ENCODE measurements at regions of chr22 and their contacts with region 1.

Region 1: DNA sequence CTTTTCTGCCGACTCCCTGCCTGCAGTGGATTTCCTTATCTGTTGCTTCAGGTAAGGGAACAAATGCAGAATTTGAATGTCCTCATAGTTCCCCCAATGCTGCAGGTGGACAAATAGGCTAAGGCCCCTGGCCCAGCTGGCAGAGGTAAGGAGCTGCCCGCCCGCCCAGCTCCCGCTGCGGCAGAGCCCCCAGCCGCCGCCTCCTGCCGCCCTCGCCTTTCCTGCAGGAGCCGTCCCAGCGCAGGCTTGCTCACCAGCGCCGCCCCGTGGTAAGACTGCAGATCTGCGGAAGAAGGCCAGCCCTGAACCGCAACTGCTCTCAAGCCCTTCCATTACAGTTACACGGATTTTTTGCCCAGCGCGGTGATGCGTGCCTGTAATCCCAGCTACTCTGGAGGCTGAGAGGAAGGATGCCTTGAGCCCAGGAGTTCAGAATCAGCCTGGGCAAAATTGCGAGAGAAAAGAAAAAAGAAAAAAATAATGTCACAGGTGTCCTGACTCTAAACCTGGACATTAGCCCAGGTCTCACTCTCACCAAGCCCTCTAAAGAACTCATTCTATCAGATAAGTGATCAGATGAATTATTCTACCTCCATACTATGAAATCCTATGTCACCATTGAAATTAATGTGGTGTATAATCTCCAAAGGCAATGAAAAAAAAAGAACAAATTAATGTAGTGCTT is 51.2 kb upstream of the EMID1 start:
- DNase-seq: peak; percentile 15
- H3K4me3 ChIP-seq: peak overlapping the region; percentile 25; the same call in 1 of the 2 replicates
- H3K27ac ChIP-seq: no peak overlapping the region
- H3K27me3 ChIP-seq: no peaks in the 10 kb centered on the region
- CTCF ChIP-seq: peak; percentile 93

Region 2: GRCh38 chr22:28570691-28571373 is 583.7 kb before region 1 on chr22:
- CTCF ChIA-PET with region 1: no interaction called
- POLR2A ChIA-PET with region 1: no interaction called
- DNase-seq: no peak
- H3K4me3 ChIP-seq: no peak overlapping the region
- H3K27ac ChIP-seq: no peak overlapping the region
- H3K27me3 ChIP-seq: no peaks in the 10 kb centered on the region
- CTCF ChIP-seq: no peak

Region 3: DNA sequence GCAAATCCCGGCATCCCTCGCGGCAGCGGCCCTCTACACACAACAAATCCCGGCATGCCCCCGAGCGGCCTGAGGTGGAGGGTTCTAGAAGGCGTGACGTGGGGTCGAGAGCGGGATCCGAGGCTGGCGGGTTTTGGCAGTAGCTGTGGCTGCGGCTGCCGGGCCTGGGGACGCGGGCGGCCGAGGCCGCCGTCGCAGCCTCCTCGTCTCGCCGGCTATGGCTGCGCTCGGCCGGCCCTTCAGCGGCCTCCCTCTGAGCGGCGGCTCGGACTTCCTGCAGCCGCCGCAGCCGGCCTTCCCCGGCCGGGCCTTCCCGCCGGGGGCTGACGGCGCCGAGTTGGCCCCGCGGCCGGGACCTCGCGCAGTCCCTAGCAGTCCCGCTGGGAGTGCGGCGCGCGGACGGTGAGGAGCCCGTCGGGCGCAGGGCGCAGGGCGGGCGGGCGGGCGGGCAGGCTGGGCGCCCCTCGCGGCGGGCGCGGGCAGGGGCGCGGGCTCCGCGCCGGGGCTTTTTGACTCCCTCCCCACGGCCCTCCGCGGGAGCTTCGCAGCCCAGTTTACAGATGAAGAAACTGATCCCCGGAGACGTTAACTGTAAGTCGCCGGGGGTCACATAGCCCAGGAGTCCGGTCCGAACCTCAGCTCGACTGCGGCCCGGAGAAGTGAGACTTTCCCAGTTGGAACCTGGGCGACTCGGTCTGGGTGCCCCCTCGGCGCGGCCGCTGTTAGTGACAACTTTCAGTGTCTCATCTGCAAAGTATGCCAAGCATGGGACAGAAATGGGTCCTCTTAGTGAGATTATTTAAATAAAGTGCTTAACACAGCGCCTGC is 381.7 kb before region 1 on chr22 and contains the start of gene CCDC117:
- CTCF ChIA-PET with region 1: interaction called, 11 read pairs
- POLR2A ChIA-PET with region 1: no interaction called
- DNase-seq: peak; percentile 87
- H3K4me3 ChIP-seq: peak within 1 kb of the TSS; percentile 87
- H3K27ac ChIP-seq: peak within 1 kb of the TSS; percentile 85
- H3K27me3 ChIP-seq: no peaks in the 10 kb centered on the region
- CTCF ChIP-seq: peak; percentile 22; the same call in 1 of the 2 replicates
- polyA plus RNA-seq, gene CCDC117: 15.0 and 24.4 TPM in 2 replicates

Region 4: GRCh38 chr22:28951969-28952521 is 202.5 kb before region 1 on chr22:
- CTCF ChIA-PET with region 1: no interaction called
- POLR2A ChIA-PET with region 1: no interaction called
- DNase-seq: no peak
- H3K4me3 ChIP-seq: no peak overlapping the region
- H3K27ac ChIP-seq: no peak overlapping the region
- H3K27me3 ChIP-seq: no peaks in the 10 kb centered on the region
- CTCF ChIP-seq: no peak

Region 5: DNA sequence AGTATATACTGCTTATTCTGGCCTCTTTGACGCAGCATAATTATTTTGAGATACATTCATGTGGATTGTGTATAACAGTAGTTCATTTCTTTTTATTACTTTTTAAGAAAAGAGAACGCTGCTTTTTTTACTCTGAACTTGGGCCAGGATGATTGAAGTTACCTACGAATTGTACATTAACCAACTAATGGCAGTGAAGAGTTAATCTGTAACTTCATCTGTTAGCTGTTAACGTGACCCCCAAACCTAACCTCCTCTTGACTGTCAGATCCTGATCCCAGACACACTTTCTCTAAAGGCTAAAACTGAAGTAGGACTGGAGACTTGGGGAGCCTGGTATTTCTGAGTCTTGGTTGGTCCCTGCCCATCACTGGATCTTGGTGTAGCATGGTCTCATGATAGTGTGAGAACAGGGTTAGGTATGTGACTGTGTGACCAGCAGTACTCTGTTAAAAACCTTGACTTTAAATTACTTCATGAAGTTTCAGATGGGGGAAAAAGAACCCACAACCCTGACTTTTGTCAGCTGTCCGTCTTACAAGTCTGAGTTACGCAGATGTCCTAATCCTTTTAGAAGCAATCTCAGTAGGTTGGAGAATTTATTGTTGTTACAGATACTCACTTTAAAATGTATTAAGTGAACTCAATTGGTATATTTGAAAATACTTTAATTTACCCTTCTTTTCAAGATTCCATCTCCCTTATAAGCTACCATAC is 132.2 kb before region 1 on chr22:
- CTCF ChIA-PET with region 1: no interaction called
- POLR2A ChIA-PET with region 1: no interaction called
- DNase-seq: no peak
- H3K4me3 ChIP-seq: no peak overlapping the region
- H3K27ac ChIP-seq: no peak overlapping the region
- H3K27me3 ChIP-seq: no peaks in the 10 kb centered on the region
- CTCF ChIP-seq: no peak

Region 6: GRCh38 chr22:29074499-29074772 is 80.1 kb before region 1 on chr22:
- CTCF ChIA-PET with region 1: interaction called, 15 read pairs
- POLR2A ChIA-PET with region 1: no interaction called
- DNase-seq: no peak
- H3K4me3 ChIP-seq: peak overlapping the region; percentile 70
- H3K27ac ChIP-seq: no peak overlapping the region
- H3K27me3 ChIP-seq: peaks cover 16% of the 10 kb centered on the region
- CTCF ChIP-seq: no peak

Region 7: DNA sequence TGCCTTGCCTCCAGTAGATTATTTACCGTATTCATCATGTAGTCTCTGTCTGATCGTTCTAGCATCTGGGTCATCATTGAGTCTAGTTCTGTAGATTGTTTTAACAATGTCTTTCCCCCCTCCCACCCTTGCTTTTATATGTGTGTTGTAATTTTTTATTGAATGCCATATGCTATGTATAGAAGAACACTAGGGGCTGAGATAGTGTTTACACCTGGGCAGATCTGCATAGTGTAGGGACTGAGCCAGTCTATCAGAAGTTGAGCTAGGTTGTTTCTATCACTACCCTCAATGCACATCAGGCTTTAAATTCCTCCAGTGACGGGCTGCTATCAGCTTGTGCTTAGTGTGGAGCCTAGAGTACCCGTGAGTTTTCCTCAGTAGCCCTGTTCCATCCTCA is 20.1 kb before region 1 on chr22:
- CTCF ChIA-PET with region 1: interaction called, 10 read pairs
- POLR2A ChIA-PET with region 1: no interaction called
- DNase-seq: no peak
- H3K4me3 ChIP-seq: no peak overlapping the region
- H3K27ac ChIP-seq: no peak overlapping the region
- H3K27me3 ChIP-seq: no peaks in the 10 kb centered on the region
- CTCF ChIP-seq: no peak

Region 8: DNA sequence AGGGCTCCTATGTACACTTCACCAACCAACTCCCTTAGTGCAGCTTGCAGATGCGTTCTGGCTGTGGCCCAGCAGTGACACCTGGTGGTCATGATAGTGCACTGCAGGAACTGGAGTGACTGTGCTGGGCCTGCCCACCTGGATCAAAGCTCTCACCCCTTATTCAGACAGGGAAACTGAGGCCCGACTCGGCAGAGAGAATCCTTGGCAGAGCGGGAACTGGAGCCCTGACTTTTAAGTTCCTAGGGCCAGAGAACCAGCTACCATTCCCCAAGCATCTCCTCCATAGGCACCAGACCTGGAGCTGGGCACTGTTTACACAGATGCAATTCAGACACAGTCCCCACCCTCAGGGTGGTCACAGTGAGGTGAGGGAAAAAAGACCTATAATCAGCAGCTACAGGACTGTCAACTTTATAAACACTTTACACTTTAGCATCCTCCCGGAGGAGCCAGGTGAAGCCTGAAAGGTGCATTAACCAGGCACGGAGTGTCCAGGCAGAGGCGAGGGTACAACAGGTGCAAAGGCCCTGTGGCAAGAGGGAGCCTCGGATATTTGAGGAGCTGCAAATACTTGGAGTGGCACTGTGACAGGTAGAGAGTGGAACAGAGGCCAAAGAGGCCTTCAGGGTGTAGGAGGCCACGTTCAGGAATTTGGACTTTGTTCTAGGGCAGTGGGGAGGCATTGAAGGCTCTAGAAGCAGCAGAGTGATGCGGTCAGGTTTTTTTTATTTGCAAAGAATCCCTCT is 91.3 kb after region 1 on chr22:
- CTCF ChIA-PET with region 1: interaction called, 26 read pairs
- POLR2A ChIA-PET with region 1: no interaction called
- DNase-seq: peak; percentile 29
- H3K4me3 ChIP-seq: no peak overlapping the region
- H3K27ac ChIP-seq: no peak overlapping the region
- H3K27me3 ChIP-seq: peaks cover 8% of the 10 kb centered on the region
- CTCF ChIP-seq: peak; percentile 99

Measured in AG04450 (cell line).